ENCODE measurements at regions of chr1 and their contacts with region 1.

Region 1: DNA sequence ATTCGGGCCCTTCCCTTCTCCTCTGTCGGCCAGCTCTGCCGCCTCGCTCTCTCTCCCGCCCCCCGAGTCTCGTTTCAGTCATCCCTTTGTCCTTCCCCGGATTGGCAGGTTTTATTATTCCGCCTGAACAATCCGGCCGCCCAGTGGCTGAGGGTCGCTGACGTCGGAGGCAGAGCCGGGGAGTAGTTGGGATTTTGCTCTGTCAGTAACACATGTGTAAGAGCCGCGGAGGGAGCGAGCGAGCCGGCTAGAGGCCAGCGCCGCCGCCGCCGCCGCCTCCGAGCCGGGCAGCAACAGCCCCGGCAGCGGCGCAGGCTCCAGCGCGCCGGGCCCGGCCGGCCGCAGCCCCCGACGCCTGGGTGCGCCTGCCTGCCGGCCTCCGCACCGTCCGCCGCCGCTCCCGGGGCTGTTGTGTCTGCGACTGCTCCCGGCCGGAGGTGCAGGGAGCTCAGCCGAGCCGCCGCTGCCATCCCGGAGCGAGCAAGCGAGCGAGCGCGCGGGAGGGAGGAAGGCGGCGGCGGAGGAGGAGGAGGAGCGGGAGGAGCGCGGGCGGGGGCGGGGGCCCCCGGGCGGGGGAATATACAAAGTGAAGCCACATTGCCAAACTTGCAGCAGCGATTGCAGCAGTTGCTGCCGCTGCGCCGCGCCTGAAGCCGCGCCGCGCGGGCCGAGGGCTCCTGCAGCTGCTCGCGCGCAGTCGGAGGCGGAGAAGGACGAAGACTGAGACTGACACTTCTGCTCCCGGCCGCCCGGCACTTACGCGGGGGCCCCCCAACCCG is at the start of gene LMO4:
- DNase-seq: peak; percentile 99
- H3K4me3 ChIP-seq: peak within 1 kb of the TSS; percentile 94
- H3K27ac ChIP-seq: peak within 1 kb of the TSS; percentile 96
- H3K4me1 ChIP-seq: peaks cover 17% of the 10 kb centered on the region
- H3K27me3 ChIP-seq: no peaks in the 10 kb centered on the region
- total RNA-seq, gene LMO4: 93.2 and 103 TPM in 2 replicates

Region 2: GRCh38 chr1:87730274-87731216 is 402.1 kb after region 1 on chr1:
- in situ Hi-C with region 1: no loop called
- DNase-seq: peak; percentile 20
- H3K4me3 ChIP-seq: no peak overlapping the region
- H3K27ac ChIP-seq: no peak overlapping the region
- H3K4me1 ChIP-seq: no peaks in the 10 kb centered on the region
- H3K27me3 ChIP-seq: no peaks in the 10 kb centered on the region

Region 3: GRCh38 chr1:87953732-87954344 is 625.4 kb after region 1 on chr1:
- in situ Hi-C with region 1: loop called (anchors 25 kb)
- DNase-seq: peak; percentile 82
- H3K4me3 ChIP-seq: no peak overlapping the region
- H3K27ac ChIP-seq: no peak overlapping the region
- H3K4me1 ChIP-seq: peaks cover 45% of the 10 kb centered on the region
- H3K27me3 ChIP-seq: no peaks in the 10 kb centered on the region

Region 4: DNA sequence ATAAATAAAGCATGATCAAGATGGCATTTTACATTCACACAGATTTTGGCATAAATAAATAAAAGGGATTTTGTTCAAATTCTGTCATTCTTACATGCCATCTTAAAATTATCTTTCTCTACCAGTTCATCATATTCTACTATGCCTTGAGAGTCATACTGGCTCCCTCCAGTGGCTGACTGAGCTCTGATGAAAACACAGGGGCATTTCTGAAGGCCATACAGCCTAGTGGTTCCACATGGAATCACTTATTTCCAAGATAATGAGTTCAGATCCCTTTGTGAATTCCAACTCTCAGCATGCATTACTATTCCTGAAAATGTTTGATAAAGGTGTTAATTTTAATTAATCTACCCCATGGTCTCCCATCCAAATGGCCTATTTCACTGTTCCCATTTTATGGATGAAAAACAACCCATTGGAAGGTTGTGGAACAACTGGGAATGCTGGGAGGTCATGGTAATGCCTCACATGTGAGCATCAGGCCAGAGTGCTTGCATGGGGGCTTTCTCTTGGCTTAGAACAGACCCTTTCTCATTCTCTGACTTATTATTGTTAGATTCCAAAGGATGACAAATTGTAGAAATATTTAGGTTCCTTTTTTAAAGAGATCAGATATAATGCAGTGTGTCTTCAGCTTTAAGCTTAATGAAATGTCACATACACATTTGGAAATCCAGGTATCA is 733.2 kb after region 1 on chr1:
- in situ Hi-C with region 1: loop called (anchors 25 kb)
- DNase-seq: peak; percentile 82
- H3K4me3 ChIP-seq: no peak overlapping the region
- H3K27ac ChIP-seq: no peak overlapping the region
- H3K4me1 ChIP-seq: peaks cover 8% of the 10 kb centered on the region
- H3K27me3 ChIP-seq: no peaks in the 10 kb centered on the region